ENCODE measurements at regions of chr3 and their contacts with region 1.

Region 1: DNA sequence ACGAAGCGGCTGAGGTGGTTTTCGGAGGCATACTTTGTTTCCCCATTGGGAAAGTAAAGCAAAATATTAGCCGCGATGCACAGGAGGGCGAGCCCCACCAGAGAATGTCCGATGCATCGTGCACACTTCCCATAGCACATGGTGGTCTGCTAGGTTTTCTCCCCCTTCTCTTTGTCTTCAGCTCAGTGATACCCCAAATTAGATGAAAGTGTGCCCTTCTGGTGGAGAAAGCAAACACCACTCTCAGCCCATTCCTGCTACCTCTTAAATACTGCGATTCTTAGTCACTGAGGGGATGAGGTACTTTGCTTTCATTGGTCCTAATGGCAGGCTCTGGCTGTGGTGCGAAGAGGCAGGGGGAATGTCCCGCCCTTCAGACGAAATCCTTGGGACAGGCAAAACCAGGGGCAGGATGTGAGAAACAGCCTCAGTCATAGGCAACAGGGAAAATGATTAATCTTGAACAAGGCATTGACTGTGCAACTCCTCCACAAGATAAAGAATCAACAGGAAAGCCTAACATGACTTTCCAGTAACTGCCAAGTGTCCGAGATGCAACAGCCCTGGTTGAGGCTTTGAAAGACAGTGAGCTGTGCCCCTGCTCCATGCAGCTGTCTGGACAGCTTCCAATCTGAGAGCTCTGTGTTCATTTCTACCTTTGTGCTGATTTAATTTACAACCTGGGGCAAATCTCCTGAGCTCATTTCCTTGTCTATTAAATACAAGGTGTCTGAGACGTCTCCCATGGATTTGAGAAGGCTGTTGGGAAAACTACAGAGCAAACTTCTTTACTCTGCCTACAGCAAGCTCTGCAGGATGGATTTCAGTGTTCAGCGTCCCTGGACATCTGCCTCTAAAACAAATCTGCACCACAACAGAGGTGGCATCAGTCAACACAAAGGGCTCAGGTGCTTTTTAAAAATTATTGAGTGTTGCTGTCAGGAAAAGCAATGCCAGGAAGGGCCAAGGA is at the start of gene TM4SF1:
- DNase-seq: peak; percentile 97
- H3K4me3 Mint-ChIP-seq: peak within 1 kb of the TSS; percentile 72
- H3K27ac Mint-ChIP-seq: peak within 1 kb of the TSS; percentile 68
- H3K4me1 Mint-ChIP-seq: peaks cover 47% of the 10 kb centered on the region
- H3K27me3 Mint-ChIP-seq: no peaks in the 10 kb centered on the region
- CTCF ChIP-seq: no peak
- total RNA-seq, gene TM4SF1: 20.1 and 27.7 TPM in 2 replicates

Region 2: DNA sequence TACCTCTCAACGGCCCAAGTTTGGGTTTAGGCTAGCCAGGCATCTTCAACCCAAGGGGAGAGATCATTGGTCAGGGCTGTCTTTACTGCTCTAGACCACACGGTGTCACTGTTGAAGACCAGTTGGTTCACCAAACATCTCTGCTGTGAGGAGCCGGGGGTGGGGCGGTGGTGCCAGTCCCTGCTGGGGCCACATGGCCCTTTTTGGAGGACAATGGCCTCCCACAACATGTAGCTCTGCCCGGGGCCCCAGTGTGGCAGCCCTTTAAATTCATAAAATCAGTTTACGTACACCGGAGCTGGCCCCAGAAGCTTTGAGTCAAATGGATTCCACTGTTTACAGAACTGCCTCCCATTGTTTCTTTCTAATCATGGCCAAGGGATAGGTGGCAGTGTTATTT is 25.1 kb before region 1 on chr3:
- CTCF ChIA-PET with region 1: interaction called, 30 read pairs
- POLR2A ChIA-PET with region 1: interaction called, 9 read pairs
- intact Hi-C with region 1: no loop called
- DNase-seq: peak; percentile 79
- H3K4me3 Mint-ChIP-seq: no peak overlapping the region
- H3K27ac Mint-ChIP-seq: no peak overlapping the region
- H3K4me1 Mint-ChIP-seq: no peaks in the 10 kb centered on the region
- H3K27me3 Mint-ChIP-seq: no peaks in the 10 kb centered on the region
- CTCF ChIP-seq: peak; percentile 89

Region 3: DNA sequence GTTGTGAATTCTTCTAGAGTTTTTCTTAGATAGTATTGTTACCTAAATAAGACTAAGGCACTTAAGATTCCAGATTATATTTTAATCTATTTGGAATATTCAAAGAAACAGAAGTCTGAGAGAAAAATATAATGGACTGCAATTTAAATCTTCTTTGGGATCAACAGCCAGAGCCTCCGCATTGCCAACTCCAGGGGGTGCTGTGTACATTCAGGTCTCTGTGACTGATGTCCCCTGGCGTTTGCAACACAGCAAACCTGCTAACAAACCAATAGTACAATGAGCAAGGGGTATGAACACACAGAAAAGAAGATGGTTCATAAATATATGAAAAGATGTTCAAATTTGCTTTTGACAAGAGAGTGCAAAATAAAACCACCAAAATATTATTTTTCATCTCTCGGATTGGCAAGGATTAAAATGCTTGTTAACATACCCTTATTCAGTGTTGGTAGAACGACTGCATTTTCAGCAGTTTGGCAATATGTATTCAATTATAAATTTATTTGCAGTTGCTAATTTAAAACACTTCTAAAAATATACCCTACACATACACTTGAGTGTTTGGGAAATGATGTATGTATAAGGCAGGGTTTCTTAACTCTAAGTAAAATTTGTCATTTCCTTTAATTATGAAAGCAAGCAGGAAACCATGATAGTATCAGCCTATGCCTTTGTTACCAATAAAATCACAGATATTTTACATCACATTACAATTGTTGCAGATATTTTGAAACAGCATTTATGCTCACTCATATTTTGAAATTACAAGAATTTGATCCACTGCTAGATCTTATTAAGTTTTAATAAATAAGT is 15.9 kb after region 1 on chr3:
- CTCF ChIA-PET with region 1: interaction called, 6 read pairs
- POLR2A ChIA-PET with region 1: interaction called, 217 read pairs
- intact Hi-C with region 1: loop called (anchors 2 kb)
- DNase-seq: peak; percentile 84
- H3K4me3 Mint-ChIP-seq: no peak overlapping the region
- H3K27ac Mint-ChIP-seq: no peak overlapping the region
- H3K4me1 Mint-ChIP-seq: peaks cover 26% of the 10 kb centered on the region
- H3K27me3 Mint-ChIP-seq: no peaks in the 10 kb centered on the region
- CTCF ChIP-seq: peak; percentile 79

Region 4: GRCh38 chr3:149480325-149481017 is 102.8 kb after region 1 on chr3:
- CTCF ChIA-PET with region 1: interaction called, 15 read pairs
- POLR2A ChIA-PET with region 1: interaction called, 29 read pairs
- intact Hi-C with region 1: no loop called
- DNase-seq: peak; percentile 88
- H3K4me3 Mint-ChIP-seq: no peak overlapping the region
- H3K27ac Mint-ChIP-seq: no peak overlapping the region
- H3K4me1 Mint-ChIP-seq: no peaks in the 10 kb centered on the region
- H3K27me3 Mint-ChIP-seq: no peaks in the 10 kb centered on the region
- CTCF ChIP-seq: peak; percentile 88